Endothelial cell of umbilical vein (primary cell): ENCODE measurements at regions of chr6 and their contacts with region 1.

Region 1: GRCh38 chr6:26156076-26156849 is 69.0 kb downstream of the HFE start:
- DNase-seq: peak; percentile 94
- H3K4me3 ChIP-seq: peak overlapping the region; percentile 45 to 81 (median 68)
- H3K27ac ChIP-seq: peak overlapping the region; percentile 78
- H3K4me1 ChIP-seq: peaks cover 8% of the 10 kb centered on the region
- H3K27me3 ChIP-seq: peaks cover 0 to 3% of the 10 kb centered on the region in 2 experiments
- CTCF ChIP-seq: no peak
- POLR2A ChIP-seq: peak; percentile 97

Region 2: DNA sequence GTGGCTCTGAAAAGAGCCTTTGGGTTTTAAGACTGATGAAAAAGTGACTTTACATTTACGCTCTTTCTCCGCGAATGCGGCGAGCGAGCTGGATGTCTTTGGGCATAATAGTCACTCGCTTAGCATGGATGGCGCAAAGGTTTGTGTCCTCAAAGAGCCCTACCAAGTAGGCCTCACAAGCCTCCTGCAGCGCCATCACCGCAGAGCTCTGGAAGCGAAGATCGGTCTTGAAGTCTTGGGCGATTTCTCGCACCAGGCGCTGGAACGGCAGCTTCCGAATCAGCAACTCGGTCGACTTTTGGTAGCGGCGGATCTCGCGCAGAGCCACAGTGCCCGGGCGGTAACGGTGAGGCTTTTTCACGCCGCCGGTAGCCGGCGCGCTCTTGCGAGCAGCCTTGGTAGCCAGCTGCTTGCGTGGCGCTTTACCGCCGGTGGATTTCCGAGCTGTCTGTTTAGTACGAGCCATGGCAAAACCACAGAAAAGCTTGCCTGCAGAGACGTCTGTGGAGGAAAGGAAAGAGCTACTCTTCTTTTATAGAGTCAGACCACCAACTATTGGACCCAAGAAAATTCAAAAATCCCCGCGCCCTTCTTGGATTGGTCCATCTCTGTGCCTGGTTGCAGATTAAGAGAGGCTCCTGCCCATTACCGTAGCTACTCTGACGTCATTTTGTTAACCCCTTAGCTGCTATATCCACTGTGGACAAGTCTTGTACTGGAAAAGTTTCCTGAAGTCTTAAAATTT is 124.5 kb before region 1 on chr6:
- CTCF ChIA-PET with region 1: no interaction called
- POLR2A ChIA-PET with region 1: interaction called, 12 read pairs
- dilution Hi-C with region 1: no loop called
- intact Hi-C with region 1: loop called (anchors 1 kb)
- DNase-seq: peak; percentile 96
- H3K4me3 ChIP-seq: peak overlapping the region; percentile 45 to 78 (median 47)
- H3K27ac ChIP-seq: peak overlapping the region; percentile 88
- H3K4me1 ChIP-seq: peaks cover 33% of the 10 kb centered on the region
- H3K27me3 ChIP-seq: no peaks in the 10 kb centered on the region
- CTCF ChIP-seq: peak in 1 of 2 donors; percentile 29
- POLR2A ChIP-seq: peak; percentile 99

Region 3: GRCh38 chr6:26065952-26066380 is 90.3 kb before region 1 on chr6:
- CTCF ChIA-PET with region 1: no interaction called
- POLR2A ChIA-PET with region 1: no interaction called
- dilution Hi-C with region 1: no loop called
- intact Hi-C with region 1: loop called (anchors 1 kb)
- DNase-seq: peak; percentile 79
- H3K4me3 ChIP-seq: no peak overlapping the region
- H3K27ac ChIP-seq: no peak overlapping the region
- H3K4me1 ChIP-seq: no peaks in the 10 kb centered on the region
- H3K27me3 ChIP-seq: peaks cover 14 to 29% of the 10 kb centered on the region in 2 experiments
- CTCF ChIP-seq: peak; percentile 74 to 79
- POLR2A ChIP-seq: no peak

Region 4: GRCh38 chr6:26103770-26104456 is 52.4 kb before region 1 on chr6:
- CTCF ChIA-PET with region 1: interaction called, 15 read pairs
- POLR2A ChIA-PET with region 1: interaction called, 26 read pairs
- dilution Hi-C with region 1: no loop called
- intact Hi-C with region 1: loop called (anchors 1 kb)
- DNase-seq: peak; percentile 97
- H3K4me3 ChIP-seq: peak overlapping the region; percentile 32 to 46 (median 34)
- H3K27ac ChIP-seq: peak overlapping the region; percentile 87
- H3K4me1 ChIP-seq: peaks cover 18% of the 10 kb centered on the region
- H3K27me3 ChIP-seq: peaks cover 0 to 4% of the 10 kb centered on the region in 2 experiments
- CTCF ChIP-seq: peak; percentile 31 to 57
- POLR2A ChIP-seq: peak; percentile 99

Region 5: GRCh38 chr6:26175428-26176181 is 19.3 kb after region 1 on chr6:
- CTCF ChIA-PET with region 1: interaction called, 14 read pairs
- POLR2A ChIA-PET with region 1: interaction called, 23 read pairs
- dilution Hi-C with region 1: no loop called
- intact Hi-C with region 1: loop called (anchors 1 kb)
- DNase-seq: peak; percentile 85
- H3K4me3 ChIP-seq: no peak overlapping the region
- H3K27ac ChIP-seq: no peak overlapping the region
- H3K4me1 ChIP-seq: peaks cover 11% of the 10 kb centered on the region
- H3K27me3 ChIP-seq: no peaks in the 10 kb centered on the region
- CTCF ChIP-seq: peak; percentile 46 to 51
- POLR2A ChIP-seq: no peak

Region 6: GRCh38 chr6:26196846-26197648 is 40.8 kb after region 1 on chr6:
- CTCF ChIA-PET with region 1: interaction called, 8 read pairs
- POLR2A ChIA-PET with region 1: interaction called, 54 read pairs
- dilution Hi-C with region 1: no loop called
- intact Hi-C with region 1: loop called (anchors 1 kb)
- DNase-seq: peak; percentile 96
- H3K4me3 ChIP-seq: peak overlapping the region; percentile 1 to 98 (median 52)
- H3K27ac ChIP-seq: peak overlapping the region; percentile 94
- H3K4me1 ChIP-seq: peaks cover 19% of the 10 kb centered on the region
- H3K27me3 ChIP-seq: no peaks in the 10 kb centered on the region
- CTCF ChIP-seq: no peak
- POLR2A ChIP-seq: peak; percentile 97